ENCODE measurements at regions of chr22 and their contacts with region 1.

Region 1: DNA sequence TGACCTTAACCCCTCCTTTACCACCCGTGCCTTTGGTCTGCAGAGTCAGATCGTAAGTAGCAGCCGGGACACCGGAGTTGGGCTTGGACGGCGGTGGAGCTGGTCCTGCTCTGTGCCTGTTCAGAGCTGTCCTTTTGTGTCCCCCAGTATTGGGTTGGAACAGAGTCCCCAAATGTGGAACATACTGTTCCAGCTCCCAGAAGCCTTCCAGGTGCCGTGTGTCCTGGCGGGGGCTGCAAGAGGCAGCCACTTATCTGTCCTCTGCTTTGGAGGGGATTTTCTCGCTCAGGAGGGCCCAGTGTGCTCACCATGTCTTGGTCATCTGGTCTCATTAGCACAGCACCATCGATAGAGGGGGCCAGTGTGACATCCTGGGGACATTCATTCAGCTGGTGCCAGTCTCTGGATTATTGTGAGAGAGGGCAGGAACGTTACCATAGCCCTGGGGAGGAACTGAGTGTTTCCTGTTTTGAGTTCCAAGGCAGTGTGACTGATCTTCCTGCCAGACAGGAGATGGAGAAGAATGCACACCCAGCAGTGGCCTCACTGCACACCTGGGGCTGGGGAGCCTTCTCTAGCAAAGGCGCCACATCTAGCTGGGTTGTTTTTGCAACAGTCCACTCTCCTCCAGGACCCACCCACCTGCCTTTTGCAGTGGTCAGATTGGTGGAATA is 12.4 kb downstream of the CRELD2 start:
- DNase-seq: peak; percentile 78
- ATAC-seq: peak; percentile 73
- H3K4me3 ChIP-seq: no peak overlapping the region
- H3K27ac ChIP-seq: peak overlapping the region; percentile 45; the same call in 1 of the 2 replicates
- H3K4me1 ChIP-seq: peaks cover 22 to 41% of the 10 kb centered on the region in 2 experiments
- H3K27me3 ChIP-seq: no peaks in the 10 kb centered on the region
- CTCF ChIP-seq: peak; percentile 76 to 94 (median 82)
- POLR2A ChIP-seq: no peak
- RAD21 ChIP-seq: peak; percentile 97

Region 2: GRCh38 chr22:49979587-49980264 is 48.9 kb after region 1 on chr22:
- CTCF ChIA-PET with region 1: interaction called, 3 read pairs
- POLR2A ChIA-PET with region 1: no interaction called
- RAD21 ChIA-PET with region 1: no interaction called
- intact Hi-C with region 1: loop called (anchors 5 kb)
- DNase-seq: no peak
- ATAC-seq: peak; percentile 92
- H3K4me3 ChIP-seq: no peak overlapping the region
- H3K27ac ChIP-seq: no peak overlapping the region
- H3K4me1 ChIP-seq: peaks cover 5 to 13% of the 10 kb centered on the region in 2 experiments; a peak in 3 of 4 replicates
- H3K27me3 ChIP-seq: no peaks in the 10 kb centered on the region
- CTCF ChIP-seq: peak in 2 of 3 experiments; percentile 77 to 85; a peak in 5 of 6 replicates
- POLR2A ChIP-seq: no peak
- RAD21 ChIP-seq: peak; percentile 29; the same call in 1 of the 2 replicates

Region 3: DNA sequence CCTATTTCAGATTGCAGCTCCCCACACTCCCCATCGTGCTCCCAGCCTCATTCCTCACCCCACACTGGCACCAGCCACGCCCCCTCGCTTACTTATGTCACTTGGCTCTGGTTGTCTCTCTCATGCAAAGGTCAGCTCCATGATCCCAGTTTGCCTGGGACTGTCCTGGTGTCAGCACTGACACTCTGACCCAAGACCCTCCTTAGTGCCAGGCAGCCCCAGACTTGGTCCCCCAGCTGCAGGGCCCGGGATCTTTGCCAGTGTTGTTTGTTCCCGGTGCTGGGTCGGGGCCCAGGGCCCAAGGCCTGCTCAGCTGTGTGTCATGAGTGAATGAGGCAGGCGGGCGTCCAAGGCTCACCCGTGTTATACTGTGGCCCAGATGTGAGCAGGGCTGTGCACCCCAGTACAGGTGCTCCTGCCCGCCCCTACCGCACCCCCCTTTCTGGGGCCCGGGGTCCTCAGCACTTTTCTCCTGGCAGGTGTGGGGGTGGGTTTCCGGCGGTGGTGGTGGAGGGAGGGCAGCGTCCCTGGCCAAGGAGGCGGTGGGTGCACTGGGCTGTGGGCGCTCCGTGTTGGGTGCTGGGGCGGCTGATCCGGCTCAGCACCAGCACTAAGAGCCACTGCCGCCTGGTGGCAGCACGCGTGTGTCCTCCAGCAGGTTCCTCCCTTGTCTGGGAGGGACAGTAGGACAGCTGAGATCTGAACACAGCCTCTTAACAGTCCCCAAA is 62.2 kb after region 1 on chr22:
- CTCF ChIA-PET with region 1: interaction called, 8 read pairs
- POLR2A ChIA-PET with region 1: no interaction called
- RAD21 ChIA-PET with region 1: no interaction called
- intact Hi-C with region 1: loop called (anchors 1 kb)
- DNase-seq: no peak
- ATAC-seq: peak; percentile 97
- H3K4me3 ChIP-seq: no peak overlapping the region
- H3K27ac ChIP-seq: no peak overlapping the region; the same call in 1 of the 2 replicates
- H3K4me1 ChIP-seq: peaks cover 0 to 14% of the 10 kb centered on the region in 2 experiments; a peak in 1 of 4 replicates
- H3K27me3 ChIP-seq: no peaks in the 10 kb centered on the region
- CTCF ChIP-seq: peak; percentile 66 to 86 (median 73); a peak in 5 of 6 replicates
- POLR2A ChIP-seq: no peak
- RAD21 ChIP-seq: peak; percentile 78

Region 4: DNA sequence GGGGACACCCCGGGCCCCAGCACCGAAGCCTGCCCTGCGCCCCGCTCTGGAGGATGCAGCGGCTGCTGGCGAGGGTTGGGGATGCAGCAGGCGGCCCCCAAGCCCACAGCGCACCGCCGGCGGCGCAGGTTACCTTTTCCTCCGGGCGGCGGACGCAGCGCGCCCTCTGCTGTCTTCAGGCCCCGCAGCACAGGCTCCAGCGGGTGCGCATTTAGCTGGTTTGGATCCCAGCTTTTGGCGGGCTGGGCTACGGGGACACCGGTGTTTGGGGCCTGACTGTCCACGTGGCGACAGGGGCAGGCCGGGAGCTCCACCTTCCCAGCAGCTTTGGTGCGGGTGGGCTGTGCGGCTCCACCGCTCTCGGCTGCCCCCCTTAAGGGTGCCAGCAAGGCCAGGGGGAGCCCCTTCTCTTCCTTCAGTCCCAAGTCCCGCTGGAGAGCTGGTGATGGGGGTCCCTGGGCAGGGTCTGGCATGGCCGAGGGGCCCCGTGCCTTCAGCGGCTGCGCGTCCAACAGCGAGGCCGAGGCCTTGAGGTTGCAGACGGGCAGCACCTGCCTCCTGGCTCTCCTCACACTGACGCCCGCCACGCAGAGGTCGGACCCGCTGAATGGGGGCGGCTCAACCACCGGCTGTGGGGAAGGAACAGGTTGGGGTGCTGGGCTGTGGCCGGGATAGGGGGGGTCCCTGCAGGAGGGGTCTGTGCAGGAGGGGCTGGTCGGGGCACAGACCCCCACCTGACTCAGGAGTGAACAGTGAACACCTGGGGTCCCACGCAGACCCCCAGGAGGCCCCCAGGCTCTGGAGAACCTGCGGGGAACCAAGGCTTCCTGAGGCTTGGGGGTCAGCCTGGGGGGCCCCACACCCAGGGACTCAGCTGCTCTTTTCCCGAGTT is 99.7 kb after region 1 on chr22:
- CTCF ChIA-PET with region 1: interaction called, 115 read pairs
- POLR2A ChIA-PET with region 1: interaction called, 13 read pairs
- RAD21 ChIA-PET with region 1: interaction called, 23 to 36 read pairs
- intact Hi-C with region 1: loop called (anchors 1 kb)
- DNase-seq: peak; percentile 75
- ATAC-seq: peak; percentile 95
- H3K4me3 ChIP-seq: peak overlapping the region; percentile 41 to 55
- H3K27ac ChIP-seq: no peak overlapping the region
- H3K4me1 ChIP-seq: peaks cover 4 to 13% of the 10 kb centered on the region in 2 experiments; a peak in 2 of 4 replicates
- H3K27me3 ChIP-seq: no peaks in the 10 kb centered on the region
- CTCF ChIP-seq: peak; percentile 82 to 98 (median 88)
- POLR2A ChIP-seq: no peak
- RAD21 ChIP-seq: peak; percentile 100

Region 5: DNA sequence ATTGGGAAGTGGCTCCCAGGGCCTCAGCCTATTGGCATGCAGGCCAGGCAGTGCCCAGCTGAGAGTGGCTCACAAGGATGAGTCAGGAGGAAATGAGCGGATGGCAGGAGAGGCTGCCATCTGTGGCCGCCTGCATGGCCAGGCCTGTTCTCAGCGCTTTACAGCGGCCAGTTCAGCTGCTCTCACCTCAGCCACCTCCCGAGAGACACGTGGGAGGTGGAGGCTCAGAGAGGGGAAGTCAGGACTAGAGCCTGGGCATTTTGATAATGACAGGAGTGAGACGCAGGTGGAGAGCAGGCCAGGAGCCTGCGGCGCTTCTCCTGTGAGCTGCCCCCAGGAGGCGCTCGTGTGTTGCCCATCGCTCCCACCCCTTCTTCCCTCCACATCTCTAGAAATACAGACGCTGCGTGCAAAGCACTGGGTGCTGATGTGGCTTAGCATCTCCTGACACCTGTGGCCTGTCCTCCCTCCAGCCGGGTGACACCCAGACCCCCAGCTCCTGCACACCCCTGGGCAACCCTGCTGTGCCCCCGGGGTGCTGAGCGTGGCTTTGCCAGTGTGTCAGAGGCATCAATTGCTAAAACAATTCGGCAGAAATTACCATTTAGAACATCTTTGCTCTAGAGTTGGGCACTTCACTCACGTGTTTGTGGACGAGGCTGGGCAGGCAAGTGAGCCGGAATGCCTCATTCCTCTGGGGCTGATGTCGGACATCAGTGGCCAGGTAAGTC is 218.3 kb after region 1 on chr22:
- CTCF ChIA-PET with region 1: interaction called, 3 read pairs
- POLR2A ChIA-PET with region 1: no interaction called
- RAD21 ChIA-PET with region 1: no interaction called
- intact Hi-C with region 1: loop called (anchors 5 kb)
- DNase-seq: peak; percentile 61
- ATAC-seq: peak; percentile 94
- H3K4me3 ChIP-seq: no peak overlapping the region
- H3K27ac ChIP-seq: peak overlapping the region; percentile 44
- H3K4me1 ChIP-seq: peaks cover 3 to 9% of the 10 kb centered on the region in 2 experiments; a peak in 2 of 4 replicates
- H3K27me3 ChIP-seq: no peaks in the 10 kb centered on the region
- CTCF ChIP-seq: peak; percentile 91 to 94 (median 93)
- POLR2A ChIP-seq: no peak
- RAD21 ChIP-seq: peak; percentile 97

Measured in HCT116 (cell line).